HEK293 (cell line): ENCODE measurements at regions of chr1 and their contacts with region 1.

Region 1: GRCh38 chr1:97920832-97921571 is at the start of gene DPYD:
- H3K4me3 ChIP-seq: peak within 1 kb of the TSS; percentile 87
- H3K27ac ChIP-seq: peak within 1 kb of the TSS; percentile 90
- H3K4me1 ChIP-seq: no peaks in the 10 kb centered on the region; the same call in 1 of the 2 replicates
- CTCF ChIP-seq: no peak

Region 2: GRCh38 chr1:97553971-97554370 is 367.0 kb before region 1 on chr1:
- CTCF ChIA-PET with region 1: no interaction called
- POLR2A ChIA-PET with region 1: no interaction called
- H3K4me3 ChIP-seq: no peak overlapping the region
- H3K27ac ChIP-seq: no peak overlapping the region
- H3K4me1 ChIP-seq: no peaks in the 10 kb centered on the region
- CTCF ChIP-seq: no peak

Region 3: GRCh38 chr1:98048244-98048643 is 127.2 kb after region 1 on chr1:
- CTCF ChIA-PET with region 1: interaction called, 3 read pairs
- POLR2A ChIA-PET with region 1: interaction called, 12 read pairs
- H3K4me3 ChIP-seq: peak overlapping the region; percentile 16
- H3K27ac ChIP-seq: no peak overlapping the region
- H3K4me1 ChIP-seq: no peaks in the 10 kb centered on the region; the same call in 1 of the 2 replicates
- CTCF ChIP-seq: no peak